SK-N-SH (cell line): ENCODE measurements at regions of chr1 and their contacts with region 1.

Region 1: DNA sequence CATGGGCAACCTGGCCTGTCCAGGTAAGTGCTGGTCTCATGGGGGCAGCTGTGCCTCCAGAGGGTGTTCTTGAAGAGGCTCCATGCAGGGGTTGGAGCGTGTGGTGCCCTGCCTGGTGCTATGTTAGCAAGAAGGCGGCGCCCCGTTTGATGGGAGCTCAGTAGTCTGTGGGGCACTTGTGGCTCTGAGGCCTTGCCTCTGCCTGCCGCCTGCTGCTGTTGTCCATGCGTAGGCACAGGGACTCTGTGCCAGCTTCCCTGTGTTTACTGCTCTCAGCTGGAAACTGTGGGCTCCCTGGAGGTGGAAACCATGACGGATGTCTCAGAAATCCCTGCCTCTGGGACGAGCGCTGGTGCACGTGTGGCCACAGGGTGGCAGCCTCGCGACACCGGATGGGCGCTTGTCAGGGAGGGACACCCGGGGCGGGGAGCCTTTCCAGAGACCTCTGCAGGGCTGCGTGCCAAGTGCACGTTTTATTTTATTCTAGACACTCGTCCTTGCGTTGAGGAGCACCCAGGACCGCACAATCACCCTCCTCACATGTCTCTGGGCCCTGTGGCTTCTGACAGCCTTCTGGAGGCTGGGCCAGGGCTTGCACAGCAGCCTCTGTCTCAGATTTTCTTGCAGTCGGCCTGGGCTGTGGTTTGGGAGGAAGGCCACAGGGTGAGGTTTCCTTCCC is 27.1 kb downstream of the SNAP47 start:
- DNase-seq: peak; percentile 97
- H3K4me3 ChIP-seq: peak overlapping the region in 1 of 2 experiments; percentile 30; a peak in 1 of 4 replicates
- H3K27ac ChIP-seq: no peak overlapping the region
- H3K4me1 ChIP-seq: peaks cover 15 to 27% of the 10 kb centered on the region in 2 experiments
- H3K27me3 ChIP-seq: no peaks in the 10 kb centered on the region
- CTCF ChIP-seq: peak; percentile 92
- EP300 ChIP-seq: no peak
- RAD21 ChIP-seq: peak; percentile 92

Region 2: GRCh38 chr1:227586733-227587132 is 175.6 kb before region 1 on chr1:
- CTCF ChIA-PET with region 1: no interaction called
- POLR2A ChIA-PET with region 1: no interaction called
- DNase-seq: no peak
- H3K4me3 ChIP-seq: no peak overlapping the region
- H3K27ac ChIP-seq: no peak overlapping the region
- H3K4me1 ChIP-seq: no peaks in the 10 kb centered on the region
- H3K27me3 ChIP-seq: no peaks in the 10 kb centered on the region
- CTCF ChIP-seq: no peak
- EP300 ChIP-seq: no peak
- RAD21 ChIP-seq: no peak

Region 3: DNA sequence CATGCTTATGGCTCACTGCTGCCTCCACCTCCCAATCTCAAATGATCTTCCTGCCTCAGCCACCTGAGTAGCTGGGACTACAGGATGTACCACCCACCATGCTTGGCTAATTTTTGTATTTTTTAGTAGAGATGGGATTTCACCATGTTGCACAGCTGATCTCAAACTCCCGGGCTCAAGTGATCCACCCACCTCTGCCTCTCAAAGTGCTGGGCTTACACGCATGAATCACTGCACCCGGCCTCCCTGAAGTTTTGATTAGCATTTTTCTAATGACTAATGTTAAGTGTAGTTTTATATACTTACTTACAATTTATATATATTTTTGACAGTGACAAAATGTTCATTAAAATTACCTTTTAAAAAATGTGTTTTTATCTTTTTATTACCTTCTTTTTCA is 157.9 kb before region 1 on chr1:
- CTCF ChIA-PET with region 1: no interaction called
- POLR2A ChIA-PET with region 1: no interaction called
- DNase-seq: no peak
- H3K4me3 ChIP-seq: no peak overlapping the region
- H3K27ac ChIP-seq: no peak overlapping the region
- H3K4me1 ChIP-seq: no peaks in the 10 kb centered on the region
- H3K27me3 ChIP-seq: no peaks in the 10 kb centered on the region
- CTCF ChIP-seq: no peak
- EP300 ChIP-seq: no peak
- RAD21 ChIP-seq: no peak

Region 4: GRCh38 chr1:227728059-227728891 is 34.1 kb before region 1 on chr1:
- CTCF ChIA-PET with region 1: interaction called, 11 read pairs
- POLR2A ChIA-PET with region 1: no interaction called
- DNase-seq: peak; percentile 94
- H3K4me3 ChIP-seq: peak overlapping the region; percentile 63 to 68
- H3K27ac ChIP-seq: peak overlapping the region in 1 of 2 experiments; percentile 35; a peak in 1 of 4 replicates
- H3K4me1 ChIP-seq: peaks cover 6 to 22% of the 10 kb centered on the region in 2 experiments; a peak in 3 of 4 replicates
- H3K27me3 ChIP-seq: no peaks in the 10 kb centered on the region
- CTCF ChIP-seq: no peak
- EP300 ChIP-seq: no peak
- RAD21 ChIP-seq: no peak

Region 5: GRCh38 chr1:227778401-227778947 is 16.1 kb after region 1 on chr1:
- CTCF ChIA-PET with region 1: interaction called, 29 read pairs
- POLR2A ChIA-PET with region 1: no interaction called
- DNase-seq: no peak
- H3K4me3 ChIP-seq: no peak overlapping the region
- H3K27ac ChIP-seq: peak overlapping the region in 1 of 2 experiments; percentile 38; a peak in 2 of 4 replicates
- H3K4me1 ChIP-seq: peaks cover 3 to 16% of the 10 kb centered on the region in 2 experiments; a peak in 3 of 4 replicates
- H3K27me3 ChIP-seq: no peaks in the 10 kb centered on the region
- CTCF ChIP-seq: no peak
- EP300 ChIP-seq: 0 out of 4 replicates have a peak, but pooled peaks of 1 of the 2 experiments have one; percentile 24
- RAD21 ChIP-seq: no peak

Region 6: DNA sequence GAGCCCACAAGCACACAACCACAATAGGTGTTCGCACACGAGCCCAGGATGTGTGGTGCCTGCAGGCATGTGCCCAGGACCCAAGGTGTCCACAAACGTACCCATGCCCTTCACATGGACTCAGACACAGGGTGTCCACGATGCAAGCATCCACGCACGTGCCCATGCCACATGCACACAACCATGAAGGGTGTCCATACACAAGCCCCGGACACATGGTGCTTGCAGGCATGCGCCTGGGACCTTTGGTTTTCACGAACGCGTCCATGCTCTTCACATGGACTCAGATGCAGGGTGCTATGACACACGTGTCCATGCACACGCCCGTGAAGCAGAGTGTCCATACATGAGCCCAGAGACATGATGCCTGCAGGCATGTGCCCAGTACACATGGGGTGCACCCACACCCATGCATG is 131.9 kb after region 1 on chr1:
- CTCF ChIA-PET with region 1: no interaction called
- POLR2A ChIA-PET with region 1: no interaction called
- DNase-seq: no peak
- H3K4me3 ChIP-seq: no peak overlapping the region
- H3K27ac ChIP-seq: no peak overlapping the region
- H3K4me1 ChIP-seq: no peaks in the 10 kb centered on the region
- H3K27me3 ChIP-seq: no peaks in the 10 kb centered on the region
- CTCF ChIP-seq: no peak
- EP300 ChIP-seq: no peak
- RAD21 ChIP-seq: no peak

Region 7: GRCh38 chr1:227946624-227947385 is 184.4 kb after region 1 on chr1:
- CTCF ChIA-PET with region 1: interaction called, 70 read pairs
- POLR2A ChIA-PET with region 1: no interaction called
- DNase-seq: peak; percentile 95
- H3K4me3 ChIP-seq: peak overlapping the region; percentile 42 to 48; a peak in 3 of 4 replicates
- H3K27ac ChIP-seq: no peak overlapping the region
- H3K4me1 ChIP-seq: peaks cover 0 to 2% of the 10 kb centered on the region in 2 experiments; a peak in 1 of 4 replicates
- H3K27me3 ChIP-seq: no peaks in the 10 kb centered on the region
- CTCF ChIP-seq: peak; percentile 69
- EP300 ChIP-seq: no peak
- RAD21 ChIP-seq: peak; percentile 85

Region 8: GRCh38 chr1:227952374-227953021 is 190.1 kb after region 1 on chr1:
- CTCF ChIA-PET with region 1: interaction called, 70 read pairs
- POLR2A ChIA-PET with region 1: no interaction called
- DNase-seq: peak; percentile 25
- H3K4me3 ChIP-seq: no peak overlapping the region
- H3K27ac ChIP-seq: no peak overlapping the region
- H3K4me1 ChIP-seq: no peaks in the 10 kb centered on the region
- H3K27me3 ChIP-seq: no peaks in the 10 kb centered on the region
- CTCF ChIP-seq: no peak
- EP300 ChIP-seq: no peak
- RAD21 ChIP-seq: no peak

Region 9: DNA sequence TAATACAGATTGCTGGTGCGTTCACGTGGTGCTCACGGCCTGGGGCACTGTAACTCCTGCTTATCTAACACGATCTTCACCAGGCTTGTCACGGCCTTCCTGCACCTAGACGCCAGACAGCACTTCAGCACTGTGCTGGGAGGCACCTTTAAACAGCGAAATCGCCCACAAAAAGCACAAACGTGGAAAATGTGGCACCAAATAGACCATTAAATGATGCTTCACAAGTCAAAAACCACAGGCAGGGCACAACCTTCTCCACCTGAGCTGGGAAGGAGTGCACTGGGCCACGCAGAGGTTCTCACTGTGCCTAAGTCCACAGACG is 423.2 kb after region 1 on chr1:
- CTCF ChIA-PET with region 1: no interaction called
- POLR2A ChIA-PET with region 1: no interaction called
- DNase-seq: no peak
- H3K4me3 ChIP-seq: no peak overlapping the region
- H3K27ac ChIP-seq: no peak overlapping the region
- H3K4me1 ChIP-seq: peaks cover 0 to 9% of the 10 kb centered on the region in 2 experiments; a peak in 1 of 4 replicates
- H3K27me3 ChIP-seq: no peaks in the 10 kb centered on the region
- CTCF ChIP-seq: no peak
- EP300 ChIP-seq: no peak
- RAD21 ChIP-seq: no peak